ENCODE measurements at regions of chr17 and their contacts with region 1.

Region 1: GRCh38 chr17:15257258-15257788 is 7.8 kb downstream of the PMP22 start:
- H3K4me3 Mint-ChIP-seq: no peak overlapping the region
- H3K27ac Mint-ChIP-seq: no peak overlapping the region
- H3K4me1 Mint-ChIP-seq: peaks cover 57% of the 10 kb centered on the region
- H3K27me3 Mint-ChIP-seq: peaks cover 50% of the 10 kb centered on the region

Region 2: GRCh38 chr17:15233022-15233805 is 24.1 kb before region 1 on chr17:
- intact Hi-C with region 1: loop called (anchors 2 kb)
- H3K4me3 Mint-ChIP-seq: no peak overlapping the region
- H3K27ac Mint-ChIP-seq: peak overlapping the region; percentile 10
- H3K4me1 Mint-ChIP-seq: peaks cover 39% of the 10 kb centered on the region
- H3K27me3 Mint-ChIP-seq: peaks cover 5% of the 10 kb centered on the region

Region 3: DNA sequence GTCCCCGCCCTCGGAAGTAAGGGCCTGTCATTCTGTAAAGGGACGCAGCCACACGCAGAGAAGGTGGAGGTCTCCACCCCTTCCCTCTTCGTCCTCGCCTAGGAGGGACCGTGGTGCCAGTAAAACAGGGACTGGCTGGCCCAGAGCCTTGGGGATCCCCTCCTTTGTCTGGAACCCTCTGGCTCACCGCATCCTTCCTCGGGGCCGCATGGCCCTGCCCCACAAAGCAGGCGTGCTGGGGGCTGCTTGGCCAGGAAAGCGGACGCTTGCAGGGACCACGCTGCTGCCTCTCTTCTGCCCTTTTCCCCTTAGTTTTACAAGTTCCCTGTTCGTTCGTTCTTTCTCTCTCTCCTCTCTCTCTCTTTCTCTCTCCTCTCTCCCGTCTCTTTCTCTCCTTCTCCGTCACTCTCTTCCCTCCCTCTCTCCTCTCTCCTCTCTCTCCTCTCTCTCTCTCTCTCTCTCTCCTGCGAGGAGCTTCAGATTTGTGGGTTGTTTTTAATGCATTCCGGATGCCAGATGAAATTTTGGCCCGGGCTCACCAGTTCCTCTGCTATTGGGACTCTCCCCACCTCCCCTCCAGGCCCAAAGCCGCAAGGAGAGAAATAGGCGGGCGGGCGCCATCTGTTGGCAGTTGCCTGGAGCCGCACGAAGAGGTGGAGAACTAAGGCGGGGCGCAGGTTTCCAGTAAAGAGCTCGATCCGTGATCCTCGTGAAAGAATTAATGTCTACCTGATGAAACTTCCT is 245.2 kb after region 1 on chr17:
- intact Hi-C with region 1: loop called (anchors 2 kb)
- H3K4me3 Mint-ChIP-seq: peak overlapping the region; percentile 11
- H3K27ac Mint-ChIP-seq: peak overlapping the region; percentile 17
- H3K4me1 Mint-ChIP-seq: peaks cover 7% of the 10 kb centered on the region
- H3K27me3 Mint-ChIP-seq: peaks cover 3% of the 10 kb centered on the region

Region 4: DNA sequence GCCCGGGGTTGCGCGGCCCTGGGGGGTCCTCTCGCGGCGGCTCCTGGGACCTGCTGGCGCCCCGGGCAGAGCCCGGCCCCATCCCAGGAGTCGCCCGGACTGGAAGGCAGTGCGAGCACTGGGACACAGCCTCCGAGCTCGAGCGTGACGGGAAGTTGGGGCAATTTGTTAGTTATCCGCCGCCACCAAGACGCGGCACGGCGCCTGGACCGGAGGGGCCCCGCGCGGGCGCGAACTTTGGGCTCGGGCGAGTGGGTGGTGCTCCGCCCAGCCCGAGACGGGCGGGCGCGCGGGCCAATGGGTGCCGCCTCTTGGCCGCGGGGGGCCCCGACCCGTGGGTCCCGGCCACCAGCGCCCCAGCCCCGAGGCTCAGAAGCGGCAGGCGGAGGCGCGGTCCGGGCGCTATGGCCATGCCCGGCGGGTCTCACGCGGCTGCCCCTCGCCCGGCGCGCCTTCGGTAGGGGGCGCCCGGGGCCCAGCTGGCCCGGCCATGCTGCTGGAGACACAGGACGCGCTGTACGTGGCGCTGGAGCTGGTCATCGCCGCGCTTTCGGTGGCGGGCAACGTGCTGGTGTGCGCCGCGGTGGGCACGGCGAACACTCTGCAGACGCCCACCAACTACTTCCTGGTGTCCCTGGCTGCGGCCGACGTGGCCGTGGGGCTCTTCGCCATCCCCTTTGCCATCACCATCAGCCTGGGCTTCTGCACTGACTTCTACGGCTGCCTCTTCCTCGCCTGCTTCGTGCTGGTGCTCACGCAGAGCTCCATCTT is 687.6 kb after region 1 on chr17 and contains the start of gene ADORA2B:
- intact Hi-C with region 1: loop called (anchors 5 kb)
- H3K4me3 Mint-ChIP-seq: peak within 1 kb of the TSS; percentile 78
- H3K27ac Mint-ChIP-seq: peak within 1 kb of the TSS; percentile 83
- H3K4me1 Mint-ChIP-seq: peaks cover 62% of the 10 kb centered on the region
- H3K27me3 Mint-ChIP-seq: peaks cover 9% of the 10 kb centered on the region

Region 5: DNA sequence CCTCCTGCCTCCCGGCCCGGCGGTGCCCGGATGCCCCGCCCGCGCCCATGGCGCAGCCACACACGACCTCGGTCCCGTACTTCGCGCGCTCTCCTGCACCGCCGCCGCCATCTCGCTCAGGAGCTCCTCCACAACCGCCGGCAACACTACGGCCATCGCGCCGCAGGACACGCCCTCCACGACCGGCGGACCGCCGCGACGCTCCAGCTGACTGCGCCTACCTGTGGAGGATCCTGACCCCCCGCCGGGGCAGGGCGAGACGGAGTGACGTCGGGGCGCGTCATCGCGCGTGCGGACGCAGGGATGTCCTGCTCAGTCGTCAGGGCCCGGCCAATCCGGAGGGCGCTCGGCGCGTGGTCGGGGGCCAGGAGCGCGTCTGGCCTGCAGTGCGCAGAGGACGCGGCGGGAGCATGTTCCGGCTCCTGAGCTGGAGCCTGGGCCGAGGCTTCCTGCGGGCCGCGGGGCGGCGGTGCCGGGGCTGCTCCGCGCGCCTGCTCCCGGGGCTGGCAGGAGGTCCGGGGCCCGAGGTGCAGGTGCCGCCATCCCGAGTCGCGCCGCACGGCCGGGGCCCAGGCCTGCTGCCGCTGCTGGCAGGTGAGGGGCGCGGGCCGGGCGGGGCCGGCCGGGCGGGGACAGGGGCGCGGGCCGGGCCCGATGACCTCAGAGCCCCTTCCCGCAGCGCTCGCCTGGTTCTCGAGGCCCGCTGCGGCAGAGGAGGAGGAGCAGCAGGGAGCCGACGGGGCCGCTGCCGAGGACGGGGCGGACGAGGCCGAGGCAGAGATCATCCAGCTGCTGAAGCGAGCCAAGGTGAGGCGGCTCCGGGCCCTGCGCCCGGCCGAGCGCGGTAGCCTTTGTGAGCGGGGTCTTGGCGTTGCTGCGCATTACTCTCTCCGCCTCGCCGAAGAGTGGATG is 742.4 kb after region 1 on chr17 and contains the starts of genes TTC19 and ZSWIM7:
- intact Hi-C with region 1: loop called (anchors 5 kb)
- H3K4me3 Mint-ChIP-seq: peak within 1 kb of the TSS; percentile 93
- H3K27ac Mint-ChIP-seq: peak within 1 kb of the TSS; percentile 92
- H3K4me1 Mint-ChIP-seq: peaks cover 49% of the 10 kb centered on the region
- H3K27me3 Mint-ChIP-seq: no peaks in the 10 kb centered on the region